OCI-LY7 (cell line): ENCODE measurements at regions of chrX and their contacts with region 1.

Region 1: GRCh38 chrX:86103061-86103460 is 45.2 kb upstream of the DACH2 start:
- DNase-seq: no peak
- H3K4me3 ChIP-seq: no peak overlapping the region
- H3K27ac ChIP-seq: no peak overlapping the region
- H3K4me1 ChIP-seq: no peaks in the 10 kb centered on the region
- CTCF ChIP-seq: no peak

Region 2: DNA sequence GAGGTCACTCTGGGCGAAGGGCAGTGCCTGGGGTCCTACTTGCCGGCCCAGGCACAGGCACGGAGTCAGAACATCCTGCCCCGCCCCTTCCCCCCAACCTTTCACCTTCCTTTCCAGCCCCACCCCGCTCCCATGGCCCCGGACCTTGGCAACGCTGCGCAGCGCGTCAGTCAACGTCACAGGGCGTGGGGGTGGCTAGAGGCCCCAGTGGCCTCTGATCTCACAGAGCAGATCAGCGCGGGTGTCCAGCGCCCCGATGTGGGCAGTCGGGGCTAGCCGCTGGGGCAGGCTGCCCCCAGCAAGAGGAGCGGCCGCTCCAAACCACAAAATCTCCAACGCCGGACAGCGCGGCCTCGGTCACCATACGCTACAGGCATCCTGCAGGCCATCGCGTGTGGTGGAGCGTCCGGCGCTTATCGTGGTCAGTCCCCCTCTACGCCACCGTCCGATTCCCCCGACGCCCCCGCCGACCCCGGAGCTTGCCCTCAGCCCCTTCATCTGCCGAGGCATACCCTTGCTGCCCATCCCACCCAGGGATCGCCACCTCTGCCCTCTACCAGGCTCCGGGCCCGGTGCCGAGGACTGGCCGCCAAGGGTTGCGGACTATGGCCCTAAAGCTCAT is 1169.0 kb before region 1 on chrX:
- CTCF ChIA-PET with region 1: no interaction called
- POLR2A ChIA-PET with region 1: no interaction called
- intact Hi-C with region 1: no loop called
- DNase-seq: no peak
- H3K4me3 ChIP-seq: no peak overlapping the region
- H3K27ac ChIP-seq: no peak overlapping the region
- H3K4me1 ChIP-seq: no peaks in the 10 kb centered on the region
- CTCF ChIP-seq: no peak

Region 3: DNA sequence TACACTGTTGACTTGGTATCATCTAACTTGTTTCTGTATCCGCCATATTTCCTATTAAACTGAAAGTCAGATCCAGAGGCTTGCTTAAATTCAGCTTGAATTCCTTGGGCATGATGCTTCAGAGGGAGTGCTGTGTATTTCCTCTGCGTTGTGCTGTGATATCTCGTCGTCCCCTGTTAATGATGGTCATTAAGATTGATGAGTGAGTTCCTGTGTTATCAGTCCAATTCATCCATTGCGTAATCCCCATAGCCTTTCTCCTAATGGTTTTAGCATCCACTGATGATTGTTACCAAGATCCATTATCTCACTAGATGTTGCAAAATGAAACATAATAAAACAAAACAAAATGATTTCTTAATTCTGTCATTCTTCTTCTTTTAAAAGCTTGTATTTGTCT is 24.4 kb before region 1 on chrX:
- CTCF ChIA-PET with region 1: no interaction called
- POLR2A ChIA-PET with region 1: no interaction called
- intact Hi-C with region 1: loop called (anchors 1 kb)
- DNase-seq: no peak
- H3K4me3 ChIP-seq: no peak overlapping the region
- H3K27ac ChIP-seq: no peak overlapping the region
- H3K4me1 ChIP-seq: no peaks in the 10 kb centered on the region
- CTCF ChIP-seq: no peak